Calu3 (cell line): ENCODE measurements at regions of chr2 and their contacts with region 1.

Region 1: GRCh38 chr2:132871831-132872230 is 201.8 kb upstream of the LYPD1 start:
- DNase-seq: no peak
- H3K4me3 Mint-ChIP-seq: no peak overlapping the region
- H3K27ac Mint-ChIP-seq: no peak overlapping the region
- H3K4me1 Mint-ChIP-seq: peaks cover 21% of the 10 kb centered on the region
- H3K27me3 Mint-ChIP-seq: no peaks in the 10 kb centered on the region
- CTCF ChIP-seq: no peak

Region 2: GRCh38 chr2:132766573-132766972 is 105.3 kb before region 1 on chr2:
- CTCF ChIA-PET with region 1: no interaction called
- intact Hi-C with region 1: no loop called
- DNase-seq: no peak
- H3K4me3 Mint-ChIP-seq: no peak overlapping the region
- H3K27ac Mint-ChIP-seq: no peak overlapping the region
- H3K4me1 Mint-ChIP-seq: no peaks in the 10 kb centered on the region
- H3K27me3 Mint-ChIP-seq: no peaks in the 10 kb centered on the region
- CTCF ChIP-seq: no peak

Region 3: GRCh38 chr2:133063775-133064174 is 191.9 kb after region 1 on chr2:
- CTCF ChIA-PET with region 1: no interaction called
- intact Hi-C with region 1: loop called (anchors 10 kb)
- DNase-seq: peak; percentile 52
- H3K4me3 Mint-ChIP-seq: no peak overlapping the region
- H3K27ac Mint-ChIP-seq: no peak overlapping the region
- H3K4me1 Mint-ChIP-seq: peaks cover 11% of the 10 kb centered on the region
- H3K27me3 Mint-ChIP-seq: no peaks in the 10 kb centered on the region
- CTCF ChIP-seq: no peak